ENCODE measurements at regions of chr1 and their contacts with region 1.

Region 1: GRCh38 chr1:230066466-230067404 is at the start of gene GALNT2:
- DNase-seq: peak; percentile 81 to 98 (median 84)

Region 2: DNA sequence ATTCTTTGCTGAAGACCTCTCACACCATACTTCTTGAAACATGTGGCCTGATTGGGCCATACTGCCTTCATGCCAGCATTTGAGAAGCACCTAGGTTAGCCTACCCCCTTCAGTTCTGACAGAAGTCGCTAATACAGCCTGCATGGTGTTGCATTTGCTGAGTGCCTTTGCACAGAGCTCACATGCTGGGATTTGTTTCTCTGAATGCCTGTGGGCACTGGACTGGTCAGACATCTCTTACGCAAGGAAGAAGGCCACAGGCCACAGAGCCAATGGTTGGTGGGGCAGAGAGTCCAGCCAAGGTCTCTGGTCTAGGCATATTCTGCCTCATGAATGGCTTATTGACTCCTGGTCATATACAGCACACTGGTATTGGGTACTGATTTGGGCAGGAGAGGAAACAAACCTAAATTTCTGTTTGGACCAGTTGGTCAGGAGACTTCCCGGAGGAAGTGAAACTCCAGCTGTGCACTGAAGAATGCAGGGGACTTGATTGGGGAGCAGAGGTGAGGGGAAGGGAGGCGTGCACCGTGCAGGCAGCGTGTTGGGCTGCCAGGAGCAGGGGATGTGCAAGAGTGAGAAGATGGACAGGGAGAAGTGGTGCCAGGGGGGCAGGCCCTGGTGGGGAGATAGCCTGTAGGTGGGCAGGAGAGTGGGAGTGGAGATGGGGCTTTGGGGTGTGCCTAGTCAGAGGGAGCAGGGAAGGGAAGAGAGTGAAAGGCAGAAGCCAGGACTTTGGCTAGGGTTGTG is 422.6 kb before region 1 on chr1:
- intact Hi-C with region 1: no loop called
- DNase-seq: no peak

Region 3: DNA sequence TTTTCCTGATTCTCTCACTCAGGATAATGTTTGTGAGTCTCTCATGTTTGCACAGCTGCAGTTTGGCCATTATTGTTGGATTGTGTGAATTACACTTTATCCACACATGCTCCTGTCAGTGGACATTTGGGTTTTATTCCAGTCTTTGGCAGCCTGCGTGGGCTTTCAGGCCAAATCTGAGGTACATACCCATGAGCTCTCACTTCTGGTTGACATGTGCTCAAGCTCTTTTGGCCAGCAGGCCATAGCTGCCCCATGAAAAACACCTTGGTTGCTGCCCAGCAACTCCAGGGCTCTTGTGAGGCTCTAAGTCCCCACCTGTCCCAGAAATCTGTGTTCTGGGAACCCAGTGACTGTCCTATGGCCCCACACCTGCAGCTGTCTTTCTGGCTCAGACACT is 124.2 kb before region 1 on chr1:
- intact Hi-C with region 1: no loop called
- DNase-seq: no peak

Region 4: DNA sequence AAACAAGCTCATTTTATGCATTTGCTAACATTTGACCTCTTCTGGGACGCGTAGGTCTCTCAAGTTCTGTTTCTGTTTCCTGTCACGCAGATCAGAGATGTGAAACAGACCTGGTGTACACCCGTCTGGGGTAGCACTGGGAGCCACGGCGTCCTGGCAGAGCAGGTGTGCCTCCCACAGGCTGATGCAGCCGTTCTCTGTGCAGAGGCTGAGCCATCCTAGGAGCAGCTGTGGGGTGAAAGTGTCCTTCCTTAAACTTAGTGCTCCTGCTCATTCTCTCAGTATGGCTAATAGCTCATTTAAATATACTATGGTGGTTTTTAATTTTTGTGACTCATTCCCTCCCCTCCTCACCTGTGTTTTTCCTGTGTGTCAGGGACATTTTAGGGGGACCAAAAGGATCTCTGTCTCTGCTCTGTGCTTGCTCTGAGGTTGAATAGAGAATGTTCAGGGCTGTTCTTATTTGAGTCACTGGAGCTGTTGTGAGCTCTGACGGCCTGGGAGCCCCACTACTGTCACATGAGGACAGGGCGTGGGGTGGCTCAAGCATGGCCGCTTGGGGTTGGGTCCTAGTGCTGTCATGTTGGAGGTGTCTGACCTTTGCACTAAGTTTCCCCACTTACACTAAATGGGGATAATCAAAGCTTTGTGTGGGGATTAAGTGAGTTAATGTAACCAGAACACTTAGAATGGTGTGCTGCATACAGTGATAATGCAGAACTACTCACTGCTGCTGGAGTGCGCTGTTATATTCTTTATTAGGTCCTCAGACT is 43.3 kb after region 1 on chr1:
- intact Hi-C with region 1: loop called (anchors 5 kb)
- DNase-seq: peak in 1 of 10 donors; percentile 53

Region 5: GRCh38 chr1:230167419-230167852 is 100.7 kb after region 1 on chr1:
- intact Hi-C with region 1: loop called (anchors 10 kb)
- DNase-seq: peak in 1 of 10 donors; percentile 15

Region 6: DNA sequence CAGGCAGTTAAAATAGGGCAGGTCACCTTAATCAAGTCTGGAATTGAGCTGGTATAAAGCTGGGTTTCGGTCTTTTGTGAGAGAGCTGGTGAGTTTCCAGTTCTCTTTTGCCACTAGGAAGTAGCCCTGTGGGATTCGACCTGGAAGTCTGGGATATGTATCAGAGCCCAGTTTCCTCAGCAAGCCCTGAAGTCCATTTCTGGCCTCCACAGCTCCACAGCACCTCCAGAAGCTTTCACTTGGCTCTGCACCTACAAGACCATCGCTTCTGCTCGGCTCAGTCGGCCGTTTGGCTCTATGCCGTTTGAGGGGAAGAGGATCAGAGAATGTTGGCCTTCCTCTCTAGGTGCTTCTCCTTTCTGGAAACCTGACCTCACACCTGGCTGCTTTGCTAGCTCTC is 148.3 kb after region 1 on chr1:
- intact Hi-C with region 1: loop called (anchors 10 kb)
- DNase-seq: peak in 8 of 10 donors; percentile 43 to 93 (median 63)

Measured in posterior cingulate gyrus (tissue), 11 donors.